ENCODE measurements at regions of chr10 and their contacts with region 1.

Region 1: GRCh38 chr10:61284222-61284890 is 168.8 kb downstream of the TMEM26 start:
- DNase-seq: no peak
- ATAC-seq: peak; percentile 61

Region 2: DNA sequence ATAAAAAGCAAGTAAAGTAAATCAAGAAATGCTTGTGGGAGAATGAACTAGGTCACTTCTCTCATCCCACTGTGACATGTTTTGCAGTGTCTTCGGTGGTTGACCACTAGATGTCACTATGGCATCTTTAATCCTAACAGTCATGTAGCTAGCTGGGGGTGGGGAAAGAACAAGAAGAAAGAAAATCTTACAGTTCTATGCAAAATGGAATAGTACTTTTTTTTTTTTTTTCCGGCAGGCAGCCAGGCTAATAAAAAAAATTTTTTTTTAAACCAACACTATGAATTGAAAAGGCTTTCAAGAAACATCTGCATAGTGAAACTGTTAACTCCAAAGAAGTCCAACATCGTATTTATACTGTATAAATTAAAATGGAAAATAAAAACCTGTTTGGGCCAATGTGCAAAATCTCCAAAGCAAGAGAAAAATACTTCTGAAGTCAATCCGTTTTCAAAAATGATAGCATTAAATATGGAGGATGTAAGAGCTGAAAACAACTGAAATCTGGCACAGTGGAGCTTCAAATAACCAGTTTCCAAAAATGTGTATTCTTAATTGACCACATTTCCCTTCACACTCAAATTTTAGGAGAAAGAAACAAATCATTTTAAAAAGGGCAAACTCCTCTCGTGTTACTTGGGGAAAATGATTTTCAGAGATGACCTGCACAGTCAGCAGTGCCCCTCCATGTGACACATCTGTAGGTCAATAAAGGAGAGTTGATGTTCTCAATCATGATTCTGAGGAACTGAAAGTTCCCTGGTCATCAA is 467.5 kb before region 1 on chr10:
- intact Hi-C with region 1: loop called (anchors 5 kb)
- DNase-seq: no peak
- ATAC-seq: peak; percentile 93

Region 3: DNA sequence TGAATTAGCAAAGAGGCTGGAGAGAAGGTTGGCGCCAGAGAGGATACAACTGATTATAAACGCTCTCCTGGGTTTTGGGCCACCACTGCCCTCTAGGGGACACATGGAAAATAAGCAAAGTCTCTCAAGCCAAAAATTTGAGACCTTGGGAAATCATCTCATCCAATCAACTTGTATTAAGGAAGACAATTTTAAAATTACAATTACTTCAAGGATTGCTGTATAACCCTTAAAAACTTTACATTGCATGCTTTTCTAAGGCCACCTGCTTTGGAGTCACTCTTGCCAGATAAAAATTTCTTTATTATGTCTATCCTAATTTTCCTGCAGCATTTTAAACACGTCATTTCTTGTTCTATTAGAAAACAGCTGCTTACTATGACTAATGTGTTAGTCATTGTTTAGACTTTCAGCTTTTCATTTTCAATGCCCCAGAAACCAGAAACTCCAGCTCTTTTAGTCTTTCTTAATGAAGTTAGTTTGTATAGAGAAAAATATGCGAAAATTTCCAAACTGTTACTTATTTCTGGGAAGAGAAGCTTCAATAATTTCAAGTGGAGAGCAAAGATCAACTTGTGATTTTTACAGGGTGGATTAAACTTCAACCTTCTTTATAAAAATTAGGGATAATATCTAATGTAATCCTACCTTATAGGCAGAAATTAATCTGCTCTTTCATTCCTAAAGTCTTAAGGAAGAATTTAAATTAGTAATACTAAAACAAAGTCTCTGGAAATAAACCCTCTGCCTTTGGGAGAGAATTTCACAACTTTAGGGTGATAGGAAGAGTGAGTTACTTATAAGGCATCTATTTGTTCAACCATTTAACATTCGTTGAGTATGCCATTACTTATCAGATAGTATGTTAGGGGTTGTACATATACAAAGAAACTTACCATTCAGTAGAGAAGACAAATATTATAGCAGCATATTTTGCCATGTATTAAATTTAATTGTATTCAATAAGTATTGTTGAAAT is 319.8 kb before region 1 on chr10:
- intact Hi-C with region 1: loop called (anchors 10 kb)
- DNase-seq: peak; percentile 57
- ATAC-seq: peak; percentile 94

Region 4: DNA sequence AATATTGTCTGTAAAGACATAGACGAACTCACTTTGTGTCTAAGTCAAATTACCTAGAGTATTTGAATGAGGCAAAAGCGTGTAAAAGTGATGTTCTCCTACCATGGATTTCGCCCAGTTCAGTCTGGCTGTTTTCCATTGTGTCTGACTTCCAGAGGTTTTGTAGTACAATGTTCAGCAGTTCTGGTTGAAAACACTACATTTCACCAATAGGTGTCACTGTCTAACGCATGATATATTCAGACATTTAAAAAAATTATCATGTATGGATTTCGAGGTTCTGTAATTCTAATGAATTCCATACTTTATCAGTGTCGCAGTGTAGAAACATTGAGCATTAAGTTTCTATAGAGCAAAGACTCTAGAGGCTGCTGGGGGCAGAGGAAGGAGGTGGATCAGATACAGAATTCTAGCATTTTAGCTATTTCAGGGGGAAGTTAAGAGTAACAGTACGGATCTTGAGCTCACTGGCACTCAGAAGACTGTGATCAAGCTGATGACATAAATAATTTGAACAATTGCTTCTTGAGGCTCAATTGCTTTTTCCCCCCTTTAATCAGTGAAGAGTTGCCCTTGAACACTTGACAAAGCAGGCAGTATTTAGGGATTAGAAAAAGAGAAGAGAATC is 143.5 kb before region 1 on chr10:
- intact Hi-C with region 1: loop called (anchors 5 kb)
- DNase-seq: no peak
- ATAC-seq: peak; percentile 70

Measured in left ventricle myocardium superior (tissue), 1 donor.